Naive thymus-derived CD4-positive, alpha-beta T cell (primary cell): ENCODE measurements at regions of chr6 and their contacts with region 1.

Region 1: DNA sequence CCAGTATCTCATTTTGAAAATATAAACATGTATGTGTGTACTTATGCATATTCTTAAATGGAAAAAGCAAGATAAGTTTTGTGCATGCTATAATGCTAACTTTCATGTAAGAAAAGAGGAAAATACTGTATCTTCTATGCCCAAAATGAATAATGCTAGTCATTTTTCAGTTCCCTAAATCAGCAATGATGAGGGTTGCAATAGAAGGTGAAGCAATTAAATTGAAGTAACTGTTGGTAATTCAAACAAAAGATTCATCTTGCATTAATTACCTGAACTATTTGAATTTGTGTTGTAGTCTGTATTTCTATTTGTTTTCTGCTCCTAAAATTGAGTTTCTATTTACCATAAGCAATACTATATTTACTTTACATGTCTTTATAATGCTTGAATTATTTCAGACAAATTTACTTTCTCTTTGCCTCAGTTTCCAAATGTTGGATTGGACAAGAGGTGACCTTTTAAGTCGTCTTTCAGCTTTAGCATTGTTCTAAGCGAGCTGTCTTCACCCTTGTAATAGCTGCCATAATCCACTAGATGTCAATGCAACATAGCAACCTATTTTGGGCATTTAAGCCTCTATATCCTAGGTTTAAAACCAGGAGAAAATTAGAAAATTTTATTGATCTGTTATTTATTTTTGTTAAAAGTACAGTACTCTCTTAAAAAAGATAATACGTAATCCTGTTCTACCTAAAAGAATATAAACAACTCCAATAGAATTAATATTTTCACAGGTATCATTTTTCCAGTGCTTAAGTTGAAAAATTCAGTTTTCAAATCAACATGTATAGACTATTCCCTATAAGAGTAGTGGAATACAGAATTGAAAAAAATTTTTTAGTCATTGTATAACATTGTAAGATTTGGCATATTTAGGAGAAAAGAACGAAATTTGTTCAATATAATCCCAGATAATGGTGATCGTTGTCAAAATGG is 52.3 kb upstream of the IFNGR1 start:
- DNase-seq: peak in 5 of 9 donors; percentile 8 to 41 (median 27)
- ATAC-seq: peak; percentile 76
- H3K4me3 ChIP-seq: no peak overlapping the region
- H3K4me3 Mint-ChIP-seq: no peak overlapping the region
- H3K27ac ChIP-seq: no peak overlapping the region
- H3K27ac Mint-ChIP-seq: no peak overlapping the region
- H3K4me1 ChIP-seq: peaks cover 0 to 16% of the 10 kb centered on the region in 2 donors
- H3K4me1 Mint-ChIP-seq: peaks cover 0 to 7% (median 0%) of the 10 kb centered on the region in 7 donors
- H3K27me3 ChIP-seq: no peaks in the 10 kb centered on the region
- H3K27me3 Mint-ChIP-seq: peaks cover 5 to 38% (median 6%) of the 10 kb centered on the region in 5 donors

Region 2: DNA sequence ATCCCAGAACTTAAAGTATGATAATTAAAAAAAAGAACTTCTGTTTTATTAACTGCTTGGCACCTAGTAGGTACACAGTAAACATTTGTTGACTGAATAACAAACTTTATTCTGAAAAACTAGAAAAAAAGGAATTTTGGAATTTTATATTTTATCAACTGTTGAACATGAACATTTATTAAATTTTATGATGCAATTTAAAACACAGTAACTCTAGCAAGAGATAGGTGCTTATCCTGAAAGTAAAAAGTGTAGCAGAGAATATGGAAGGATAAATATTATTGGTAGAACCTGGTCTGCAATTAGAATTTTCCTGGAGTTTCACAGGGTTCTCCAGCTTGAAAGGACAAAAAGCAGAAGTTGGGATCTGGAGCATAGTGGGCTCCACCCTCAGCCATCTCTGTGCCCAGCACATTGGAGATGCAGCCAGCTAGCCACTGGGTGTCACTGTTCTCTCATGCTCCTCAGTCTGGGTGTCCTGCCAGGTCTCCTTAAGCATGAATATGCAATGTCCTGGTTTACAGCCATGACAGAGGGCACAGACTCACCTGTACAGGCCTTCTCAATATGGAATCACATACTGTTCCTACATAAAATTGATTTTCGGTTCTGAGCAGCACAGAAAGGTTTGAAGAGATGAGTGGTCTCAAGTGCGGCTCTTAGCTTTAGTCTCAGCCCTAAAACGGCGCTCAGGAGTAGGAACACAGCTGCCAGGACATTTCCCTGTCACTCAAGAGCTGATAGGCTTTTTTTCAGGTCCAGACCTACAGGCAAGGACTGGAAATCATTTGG is 195.0 kb before region 1 on chr6:
- CTCF ChIA-PET with region 1: no interaction called
- POLR2A ChIA-PET with region 1: no interaction called
- intact Hi-C with region 1: loop called in 1 of 2 experiments (anchors 5 kb)
- DNase-seq: peak; percentile 4 to 50 (median 22)
- ATAC-seq: peak; percentile 95
- H3K4me3 ChIP-seq: no peak overlapping the region
- H3K4me3 Mint-ChIP-seq: no peak overlapping the region
- H3K27ac ChIP-seq: no peak overlapping the region
- H3K27ac Mint-ChIP-seq: no peak overlapping the region
- H3K4me1 ChIP-seq: no peaks in the 10 kb centered on the region
- H3K4me1 Mint-ChIP-seq: no peaks in the 10 kb centered on the region
- H3K27me3 ChIP-seq: no peaks in the 10 kb centered on the region
- H3K27me3 Mint-ChIP-seq: peaks cover 17 to 55% (median 24%) of the 10 kb centered on the region in 5 donors

Region 3: DNA sequence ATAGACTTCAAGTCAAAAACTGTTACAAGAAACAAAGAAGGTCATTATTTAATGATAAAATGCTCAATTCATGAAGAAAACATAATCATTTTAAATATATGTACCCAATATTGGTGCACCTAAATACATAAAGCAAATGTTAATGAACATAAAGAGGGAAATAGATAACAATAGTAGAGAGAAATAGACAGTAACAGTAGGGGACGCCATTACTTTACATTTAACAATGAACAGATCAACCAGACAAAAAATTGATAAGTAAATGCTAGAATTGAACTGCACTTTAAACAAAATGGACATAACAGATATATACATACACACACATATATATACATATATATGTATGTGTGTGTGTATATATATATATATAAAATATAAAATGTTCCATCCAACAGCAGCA is 135.4 kb before region 1 on chr6:
- CTCF ChIA-PET with region 1: no interaction called
- POLR2A ChIA-PET with region 1: no interaction called
- intact Hi-C with region 1: loop called in 1 of 2 experiments (anchors 5 kb)
- DNase-seq: no peak
- ATAC-seq: no peak
- H3K4me3 ChIP-seq: no peak overlapping the region
- H3K4me3 Mint-ChIP-seq: no peak overlapping the region
- H3K27ac ChIP-seq: no peak overlapping the region
- H3K27ac Mint-ChIP-seq: no peak overlapping the region
- H3K4me1 ChIP-seq: no peaks in the 10 kb centered on the region
- H3K4me1 Mint-ChIP-seq: no peaks in the 10 kb centered on the region
- H3K27me3 ChIP-seq: no peaks in the 10 kb centered on the region
- H3K27me3 Mint-ChIP-seq: peaks cover 12 to 57% (median 30%) of the 10 kb centered on the region in 5 donors

Region 4: DNA sequence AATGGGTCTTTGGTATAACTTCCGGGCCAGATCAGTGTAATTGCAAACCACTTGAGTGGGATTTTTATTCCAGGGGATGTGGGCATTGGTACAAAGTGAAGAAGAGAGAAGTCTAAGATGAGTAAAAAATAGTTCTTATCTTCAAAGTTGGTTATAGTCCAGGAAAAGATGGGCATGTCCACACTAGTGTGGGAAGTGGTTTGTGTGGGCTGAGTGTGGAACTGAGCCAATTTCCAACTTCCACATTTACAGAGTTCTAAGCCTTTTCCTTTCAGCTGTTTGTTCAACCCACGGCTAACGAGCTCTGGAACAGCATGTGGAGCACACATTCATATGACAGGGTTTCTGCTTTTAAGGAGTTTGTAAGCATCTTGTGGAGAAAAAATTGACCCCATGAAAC is 19.9 kb after region 1 on chr6:
- CTCF ChIA-PET with region 1: no interaction called
- POLR2A ChIA-PET with region 1: no interaction called
- intact Hi-C with region 1: no loop called
- DNase-seq: no peak
- ATAC-seq: peak; percentile 82
- H3K4me3 ChIP-seq: no peak overlapping the region
- H3K4me3 Mint-ChIP-seq: no peak overlapping the region
- H3K27ac ChIP-seq: no peak overlapping the region
- H3K27ac Mint-ChIP-seq: no peak overlapping the region
- H3K4me1 ChIP-seq: peaks cover 0 to 6% of the 10 kb centered on the region in 2 donors
- H3K4me1 Mint-ChIP-seq: peaks cover 0 to 13% (median 4%) of the 10 kb centered on the region in 7 donors
- H3K27me3 ChIP-seq: no peaks in the 10 kb centered on the region
- H3K27me3 Mint-ChIP-seq: peaks cover 2 to 27% (median 5%) of the 10 kb centered on the region in 5 donors

Region 5: GRCh38 chr6:137341681-137342195 is 70.2 kb after region 1 on chr6:
- CTCF ChIA-PET with region 1: interaction called, 4 read pairs
- POLR2A ChIA-PET with region 1: no interaction called
- intact Hi-C with region 1: loop called in 1 of 2 experiments (anchors 1 kb)
- DNase-seq: peak in 8 of 9 donors; percentile 16 to 62 (median 48)
- ATAC-seq: peak; percentile 80
- H3K4me3 ChIP-seq: peak overlapping the region; percentile 24
- H3K4me3 Mint-ChIP-seq: peak overlapping the region in 9 of 10 donors; percentile 52 to 87 (median 77)
- H3K27ac ChIP-seq: no peak overlapping the region
- H3K27ac Mint-ChIP-seq: peak overlapping the region in 1 of 9 donors; percentile 76
- H3K4me1 ChIP-seq: peaks cover 5 to 10% of the 10 kb centered on the region in 2 donors
- H3K4me1 Mint-ChIP-seq: peaks cover 6 to 19% (median 17%) of the 10 kb centered on the region in 7 donors
- H3K27me3 ChIP-seq: no peaks in the 10 kb centered on the region
- H3K27me3 Mint-ChIP-seq: peaks cover 0 to 55% (median 0%) of the 10 kb centered on the region in 5 donors

Region 6: GRCh38 chr6:137497721-137498463 is 226.4 kb after region 1 on chr6:
- CTCF ChIA-PET with region 1: no interaction called
- POLR2A ChIA-PET with region 1: no interaction called
- intact Hi-C with region 1: loop called in 1 of 2 experiments (anchors 10 kb)
- DNase-seq: peak in 4 of 9 donors; percentile 17 to 32 (median 28)
- ATAC-seq: peak; percentile 52
- H3K4me3 ChIP-seq: peak overlapping the region; percentile 34
- H3K4me3 Mint-ChIP-seq: peak overlapping the region; percentile 28 to 81 (median 56)
- H3K27ac ChIP-seq: no peak overlapping the region
- H3K27ac Mint-ChIP-seq: peak overlapping the region in 1 of 9 donors; percentile 13
- H3K4me1 ChIP-seq: peaks cover 35 to 36% of the 10 kb centered on the region in 2 donors
- H3K4me1 Mint-ChIP-seq: peaks cover 22 to 52% (median 39%) of the 10 kb centered on the region in 7 donors
- H3K27me3 ChIP-seq: peaks cover 47 to 55% of the 10 kb centered on the region in 2 donors
- H3K27me3 Mint-ChIP-seq: peaks cover 45 to 91% (median 76%) of the 10 kb centered on the region in 5 donors

Region 7: DNA sequence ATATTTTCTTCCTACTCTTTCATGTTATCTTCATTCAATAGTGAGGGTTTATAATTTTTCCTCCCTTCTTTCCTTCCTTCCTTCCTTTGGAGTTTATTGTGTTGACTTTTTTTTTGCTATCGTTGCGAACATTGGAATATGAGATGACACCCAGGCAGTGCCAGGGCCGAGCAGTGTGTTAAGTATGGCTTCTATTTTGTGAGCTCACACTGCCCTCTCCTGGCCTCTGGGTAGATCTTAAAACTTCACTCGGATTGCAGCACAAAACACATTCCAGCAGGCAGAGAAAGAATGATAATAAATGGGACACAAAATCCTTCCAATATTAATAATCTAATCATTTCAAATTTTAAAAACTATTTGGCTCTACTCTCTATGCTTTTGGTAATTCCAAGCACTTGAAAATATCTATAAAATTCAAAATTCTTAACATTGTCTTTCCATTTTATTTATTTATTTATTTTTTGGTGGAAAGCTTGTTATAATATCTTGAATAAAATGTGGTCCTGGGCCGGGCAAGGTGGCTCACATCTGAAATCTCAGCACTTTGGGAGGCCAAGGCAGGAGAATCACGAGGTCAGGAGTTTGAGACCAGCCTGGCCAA is 370.1 kb after region 1 on chr6:
- CTCF ChIA-PET with region 1: interaction called, 4 read pairs
- POLR2A ChIA-PET with region 1: no interaction called
- intact Hi-C with region 1: loop called (anchors 1 kb)
- DNase-seq: peak; percentile 25 to 65 (median 57)
- ATAC-seq: peak; percentile 89
- H3K4me3 ChIP-seq: no peak overlapping the region
- H3K4me3 Mint-ChIP-seq: no peak overlapping the region
- H3K27ac ChIP-seq: no peak overlapping the region
- H3K27ac Mint-ChIP-seq: no peak overlapping the region
- H3K4me1 ChIP-seq: no peaks in the 10 kb centered on the region
- H3K4me1 Mint-ChIP-seq: peaks cover 0 to 17% (median 12%) of the 10 kb centered on the region in 7 donors
- H3K27me3 ChIP-seq: no peaks in the 10 kb centered on the region
- H3K27me3 Mint-ChIP-seq: peaks cover 0 to 13% (median 6%) of the 10 kb centered on the region in 5 donors

Region 8: GRCh38 chr6:138109042-138109997 is 837.8 kb after region 1 on chr6:
- CTCF ChIA-PET with region 1: no interaction called
- POLR2A ChIA-PET with region 1: no interaction called
- intact Hi-C with region 1: loop called in 1 of 2 experiments (anchors 5 kb)
- DNase-seq: peak; percentile 47 to 77 (median 68)
- ATAC-seq: peak; percentile 84
- H3K4me3 ChIP-seq: no peak overlapping the region
- H3K4me3 Mint-ChIP-seq: peak overlapping the region in 4 of 10 donors; percentile 2 to 45 (median 7)
- H3K27ac ChIP-seq: no peak overlapping the region
- H3K27ac Mint-ChIP-seq: no peak overlapping the region
- H3K4me1 ChIP-seq: peaks cover 8 to 10% of the 10 kb centered on the region in 2 donors
- H3K4me1 Mint-ChIP-seq: peaks cover 14 to 27% (median 20%) of the 10 kb centered on the region in 7 donors
- H3K27me3 ChIP-seq: peaks cover 0 to 6% of the 10 kb centered on the region in 2 donors
- H3K27me3 Mint-ChIP-seq: peaks cover 34 to 56% (median 47%) of the 10 kb centered on the region in 5 donors